Calu3 (cell line): ENCODE measurements at regions of chr12 and their contacts with region 1.

Region 1: GRCh38 chr12:20601668-20602280 is 93.4 kb upstream of the SLCO1C1 start:
- DNase-seq: no peak
- H3K4me3 Mint-ChIP-seq: no peak overlapping the region
- H3K27ac Mint-ChIP-seq: no peak overlapping the region
- H3K4me1 Mint-ChIP-seq: no peaks in the 10 kb centered on the region
- H3K27me3 Mint-ChIP-seq: no peaks in the 10 kb centered on the region
- CTCF ChIP-seq: no peak

Region 2: DNA sequence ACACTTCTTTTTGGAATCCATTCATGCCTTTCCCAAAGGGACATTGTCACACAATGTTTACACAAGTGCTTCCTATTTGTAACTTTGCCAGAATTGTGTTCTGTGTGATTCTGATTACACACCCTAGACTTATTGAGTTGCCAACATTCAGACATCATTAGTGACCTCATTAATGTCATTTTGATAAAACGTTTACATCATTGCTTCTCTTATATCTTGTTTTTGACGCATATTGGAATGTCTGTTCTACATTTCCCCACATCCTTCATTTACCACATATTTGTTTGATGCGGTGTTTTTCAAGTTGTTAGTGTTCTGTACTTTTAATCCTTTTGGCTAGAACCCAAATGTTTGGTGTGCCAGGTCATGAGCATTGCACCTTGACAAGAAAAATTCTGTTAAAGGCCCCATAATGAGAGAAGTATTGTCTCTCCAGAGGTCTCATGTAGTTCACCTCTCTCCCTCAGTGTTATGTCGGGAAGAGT is 857.0 kb before region 1 on chr12:
- CTCF ChIA-PET with region 1: no interaction called
- intact Hi-C with region 1: loop called (anchors 10 kb)
- DNase-seq: peak; percentile 32
- H3K4me3 Mint-ChIP-seq: no peak overlapping the region
- H3K27ac Mint-ChIP-seq: peak overlapping the region; percentile 49
- H3K4me1 Mint-ChIP-seq: peaks cover 39% of the 10 kb centered on the region
- H3K27me3 Mint-ChIP-seq: no peaks in the 10 kb centered on the region
- CTCF ChIP-seq: no peak

Region 3: GRCh38 chr12:20390846-20391245 is 210.9 kb before region 1 on chr12:
- CTCF ChIA-PET with region 1: no interaction called
- intact Hi-C with region 1: loop called (anchors 5 kb)
- DNase-seq: no peak
- H3K4me3 Mint-ChIP-seq: no peak overlapping the region
- H3K27ac Mint-ChIP-seq: no peak overlapping the region
- H3K4me1 Mint-ChIP-seq: peaks cover 16% of the 10 kb centered on the region
- H3K27me3 Mint-ChIP-seq: no peaks in the 10 kb centered on the region
- CTCF ChIP-seq: no peak

Region 4: GRCh38 chr12:20463913-20464524 is 137.8 kb before region 1 on chr12:
- CTCF ChIA-PET with region 1: no interaction called
- intact Hi-C with region 1: loop called (anchors 1 kb)
- DNase-seq: peak; percentile 11
- H3K4me3 Mint-ChIP-seq: no peak overlapping the region
- H3K27ac Mint-ChIP-seq: no peak overlapping the region
- H3K4me1 Mint-ChIP-seq: no peaks in the 10 kb centered on the region
- H3K27me3 Mint-ChIP-seq: no peaks in the 10 kb centered on the region
- CTCF ChIP-seq: peak; percentile 11

Region 5: GRCh38 chr12:20487519-20487918 is 114.3 kb before region 1 on chr12:
- CTCF ChIA-PET with region 1: no interaction called
- intact Hi-C with region 1: loop called (anchors 2 kb)
- DNase-seq: no peak
- H3K4me3 Mint-ChIP-seq: no peak overlapping the region
- H3K27ac Mint-ChIP-seq: no peak overlapping the region
- H3K4me1 Mint-ChIP-seq: peaks cover 7% of the 10 kb centered on the region
- H3K27me3 Mint-ChIP-seq: no peaks in the 10 kb centered on the region
- CTCF ChIP-seq: no peak